RWPE1 (cell line): ENCODE measurements at regions of chr7 and their contacts with region 1.

Region 1: GRCh38 chr7:32206987-32207386 is 136.8 kb upstream of the PDE1C start:
- DNase-seq: no peak
- H3K27ac ChIP-seq: no peak overlapping the region
- CTCF ChIP-seq: no peak

Region 2: GRCh38 chr7:32191305-32191704 is 15.7 kb before region 1 on chr7:
- CTCF ChIA-PET with region 1: no interaction called
- POLR2A ChIA-PET with region 1: no interaction called
- DNase-seq: no peak
- H3K27ac ChIP-seq: no peak overlapping the region
- CTCF ChIP-seq: no peak

Region 3: GRCh38 chr7:32357535-32358277 is 150.7 kb after region 1 on chr7:
- CTCF ChIA-PET with region 1: interaction called, 38 read pairs
- POLR2A ChIA-PET with region 1: no interaction called
- DNase-seq: peak; percentile 60
- H3K27ac ChIP-seq: no peak overlapping the region
- CTCF ChIP-seq: peak; percentile 35